ENCODE measurements at regions of chr5 and their contacts with region 1.

Region 1: GRCh38 chr5:140362860-140363630 is 3.1 kb downstream of the SLC4A9 start:
- DNase-seq: no peak
- H3K4me3 ChIP-seq: peak overlapping the region; percentile 54
- CTCF ChIP-seq: peak; percentile 98

Region 2: DNA sequence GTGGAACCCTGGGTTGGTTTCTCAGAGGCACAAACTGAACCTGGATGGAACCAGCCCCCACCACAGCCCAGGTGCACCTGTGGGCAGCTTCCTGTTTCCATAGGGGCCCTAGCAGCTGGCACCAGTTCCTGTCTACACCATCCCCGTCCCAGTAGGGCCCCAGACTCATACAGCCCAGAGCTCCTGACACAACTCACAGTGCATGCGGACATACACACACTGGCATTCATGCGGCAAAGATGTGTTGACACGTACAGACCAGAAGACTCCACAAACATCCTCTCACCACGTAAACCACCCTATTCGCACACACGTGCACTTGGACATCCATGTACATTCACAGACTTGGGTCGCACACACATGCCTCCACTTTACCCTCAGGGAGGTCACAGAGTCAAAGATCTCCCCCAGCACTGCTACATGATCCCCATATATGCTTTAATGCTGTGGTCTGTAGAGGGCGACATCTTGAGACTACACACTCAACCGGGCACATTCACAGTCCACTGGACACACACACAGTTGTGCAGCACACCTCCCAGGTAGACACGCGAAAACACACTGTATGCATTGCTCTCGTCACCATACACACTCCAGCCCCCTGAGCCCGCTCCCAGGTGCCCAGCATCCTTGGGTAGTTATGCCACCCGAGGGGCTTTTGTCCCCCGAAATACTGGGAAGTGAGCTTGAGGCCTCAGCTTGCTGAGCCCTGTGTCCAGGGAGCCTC is 692.5 kb before region 1 on chr5:
- CTCF ChIA-PET with region 1: no interaction called
- POLR2A ChIA-PET with region 1: no interaction called
- DNase-seq: no peak
- H3K4me3 ChIP-seq: no peak overlapping the region
- CTCF ChIP-seq: peak; percentile 21

Region 3: DNA sequence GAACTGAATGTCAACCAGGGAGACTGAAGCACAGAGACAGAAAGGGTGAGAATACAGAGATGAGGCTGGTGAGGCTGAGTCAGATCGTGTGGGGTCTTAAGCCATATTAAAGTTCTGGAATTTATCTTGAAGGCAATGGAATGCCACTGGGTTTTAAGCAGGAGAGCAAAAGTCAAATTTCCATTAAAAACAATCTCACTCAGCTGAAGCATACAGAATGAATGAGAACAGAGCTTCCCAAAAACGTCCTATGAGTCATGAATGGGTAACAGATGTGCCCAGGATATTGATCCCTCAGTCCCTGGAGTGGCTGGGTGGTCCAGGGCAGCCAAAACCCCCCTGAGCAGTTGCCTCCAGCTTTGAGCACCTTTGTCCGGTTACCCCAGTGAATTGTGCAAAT is 105.0 kb before region 1 on chr5:
- CTCF ChIA-PET with region 1: interaction called, 10 read pairs
- POLR2A ChIA-PET with region 1: no interaction called
- DNase-seq: no peak
- H3K4me3 ChIP-seq: no peak overlapping the region
- CTCF ChIP-seq: no peak

Region 4: GRCh38 chr5:140718241-140718580 is 355.2 kb after region 1 on chr5:
- CTCF ChIA-PET with region 1: interaction called, 57 read pairs
- POLR2A ChIA-PET with region 1: no interaction called
- DNase-seq: no peak
- H3K4me3 ChIP-seq: no peak overlapping the region
- CTCF ChIP-seq: no peak

Region 5: GRCh38 chr5:140725799-140726471 is 362.9 kb after region 1 on chr5:
- CTCF ChIA-PET with region 1: interaction called, 57 read pairs
- POLR2A ChIA-PET with region 1: no interaction called
- DNase-seq: peak; percentile 76
- H3K4me3 ChIP-seq: peak overlapping the region; percentile 63
- CTCF ChIP-seq: no peak